T-cell (primary cell): ENCODE measurements at regions of chr11 and their contacts with region 1.

Region 1: GRCh38 chr11:2420502-2421225 is 20.1 kb downstream of the TSSC4 start:
- DNase-seq: peak in 34 of 35 experiments; percentile 40 to 89 (median 66)
- ATAC-seq: peak; percentile 85 to 95 (median 92)
- H3K4me3 ChIP-seq: no peak overlapping the region
- H3K4me3 Mint-ChIP-seq: no peak overlapping the region
- H3K27ac ChIP-seq: no peak overlapping the region
- H3K27ac Mint-ChIP-seq: no peak overlapping the region
- H3K4me1 ChIP-seq: peaks cover 0 to 17% of the 10 kb centered on the region in 2 experiments
- H3K4me1 Mint-ChIP-seq: peaks cover 0 to 4% (median 4%) of the 10 kb centered on the region in 3 donors
- H3K27me3 ChIP-seq: peaks cover 0 to 36% of the 10 kb centered on the region in 2 experiments
- H3K27me3 Mint-ChIP-seq: no peaks in the 10 kb centered on the region

Region 2: GRCh38 chr11:2305140-2305840 is 115.4 kb before region 1 on chr11:
- CTCF ChIA-PET with region 1: interaction called, 16 to 42 read pairs
- POLR2A ChIA-PET with region 1: interaction called in 1 of 2 experiments, 3 read pairs
- DNase-seq: peak; percentile 39 to 89 (median 75)
- ATAC-seq: peak; percentile 43 to 63 (median 50)
- H3K4me3 ChIP-seq: peak overlapping the region; percentile 51
- H3K4me3 Mint-ChIP-seq: peak overlapping the region; percentile 63 to 98 (median 69)
- H3K27ac ChIP-seq: peak overlapping the region; percentile 86
- H3K27ac Mint-ChIP-seq: peak overlapping the region; percentile 98 to 99
- H3K4me1 ChIP-seq: peaks cover 35 to 83% of the 10 kb centered on the region in 2 experiments
- H3K4me1 Mint-ChIP-seq: peaks cover 40 to 59% (median 58%) of the 10 kb centered on the region in 3 donors
- H3K27me3 ChIP-seq: no peaks in the 10 kb centered on the region
- H3K27me3 Mint-ChIP-seq: no peaks in the 10 kb centered on the region